ENCODE measurements at regions of chr6 and their contacts with region 1.

Region 1: GRCh38 chr6:110528101-110528929 is 51.9 kb upstream of the SLC22A16 start:
- DNase-seq: peak; percentile 73
- ATAC-seq: peak; percentile 67
- H3K4me3 Mint-ChIP-seq: no peak overlapping the region
- H3K27ac Mint-ChIP-seq: no peak overlapping the region
- H3K4me1 Mint-ChIP-seq: peaks cover 6% of the 10 kb centered on the region
- H3K27me3 Mint-ChIP-seq: peaks cover 5% of the 10 kb centered on the region
- CTCF ChIP-seq: peak; percentile 92

Region 2: DNA sequence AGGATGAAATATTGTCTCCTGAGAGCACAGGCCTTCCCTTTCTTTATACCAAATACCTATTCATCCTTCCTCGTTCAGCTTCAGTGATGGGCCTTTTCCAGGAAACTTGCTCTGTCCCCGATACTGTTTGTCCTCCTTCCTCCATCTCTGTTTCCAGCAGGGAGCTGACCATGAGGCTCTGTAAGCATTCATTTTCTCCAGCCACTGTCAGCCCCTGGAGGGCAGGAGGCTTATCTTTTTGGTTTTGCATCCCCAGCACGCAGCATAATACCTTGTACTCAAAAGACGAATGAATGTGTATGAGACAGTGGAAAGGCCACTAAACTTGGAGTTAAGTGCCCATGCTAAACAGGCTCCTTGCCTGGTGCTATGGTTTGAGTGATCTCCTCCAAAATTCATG is 22.1 kb before region 1 on chr6:
- CTCF ChIA-PET with region 1: no interaction called
- POLR2A ChIA-PET with region 1: no interaction called
- intact Hi-C with region 1: no loop called
- DNase-seq: no peak
- ATAC-seq: no peak
- H3K4me3 Mint-ChIP-seq: no peak overlapping the region
- H3K27ac Mint-ChIP-seq: no peak overlapping the region
- H3K4me1 Mint-ChIP-seq: no peaks in the 10 kb centered on the region
- H3K27me3 Mint-ChIP-seq: peaks cover 3% of the 10 kb centered on the region
- CTCF ChIP-seq: no peak

Region 3: GRCh38 chr6:110517601-110518281 is 10.6 kb before region 1 on chr6:
- CTCF ChIA-PET with region 1: interaction called, 11 read pairs
- POLR2A ChIA-PET with region 1: no interaction called
- intact Hi-C with region 1: no loop called
- DNase-seq: no peak
- ATAC-seq: no peak
- H3K4me3 Mint-ChIP-seq: no peak overlapping the region
- H3K27ac Mint-ChIP-seq: no peak overlapping the region
- H3K4me1 Mint-ChIP-seq: no peaks in the 10 kb centered on the region
- H3K27me3 Mint-ChIP-seq: peaks cover 3% of the 10 kb centered on the region
- CTCF ChIP-seq: no peak

Region 4: DNA sequence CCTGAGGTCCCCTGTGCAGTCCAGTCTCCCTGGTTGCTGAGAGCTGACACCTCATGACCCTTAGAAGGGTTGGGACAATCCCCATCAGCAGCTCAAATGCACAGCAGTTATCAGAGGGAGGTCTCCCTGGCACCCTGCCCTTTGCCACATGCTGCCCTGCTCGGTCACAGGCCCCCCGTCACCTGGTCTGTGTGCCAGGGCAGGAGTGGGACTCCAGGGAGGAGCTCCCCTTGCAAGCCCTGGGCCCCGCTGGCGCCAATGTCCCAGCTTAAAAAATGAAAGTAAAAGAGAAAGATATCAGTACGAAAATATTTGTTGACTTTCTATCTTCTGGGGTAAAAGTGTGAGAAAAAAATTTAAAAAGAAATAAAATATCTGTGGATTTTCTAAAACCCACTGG is 16.2 kb after region 1 on chr6:
- CTCF ChIA-PET with region 1: interaction called, 10 read pairs
- POLR2A ChIA-PET with region 1: no interaction called
- intact Hi-C with region 1: no loop called
- DNase-seq: no peak
- ATAC-seq: no peak
- H3K4me3 Mint-ChIP-seq: no peak overlapping the region
- H3K27ac Mint-ChIP-seq: no peak overlapping the region
- H3K4me1 Mint-ChIP-seq: peaks cover 6% of the 10 kb centered on the region
- H3K27me3 Mint-ChIP-seq: peaks cover 7% of the 10 kb centered on the region
- CTCF ChIP-seq: no peak

Region 5: GRCh38 chr6:110949679-110950285 is 421.5 kb after region 1 on chr6:
- CTCF ChIA-PET with region 1: interaction called, 22 read pairs
- POLR2A ChIA-PET with region 1: no interaction called
- intact Hi-C with region 1: loop called (anchors 2 kb)
- DNase-seq: no peak
- ATAC-seq: no peak
- H3K4me3 Mint-ChIP-seq: no peak overlapping the region
- H3K27ac Mint-ChIP-seq: no peak overlapping the region
- H3K4me1 Mint-ChIP-seq: peaks cover 2% of the 10 kb centered on the region
- H3K27me3 Mint-ChIP-seq: no peaks in the 10 kb centered on the region
- CTCF ChIP-seq: peak; percentile 69